CD4-positive, alpha-beta memory T cell (primary cell): ENCODE measurements at regions of chr5 and their contacts with region 1.

Region 1: DNA sequence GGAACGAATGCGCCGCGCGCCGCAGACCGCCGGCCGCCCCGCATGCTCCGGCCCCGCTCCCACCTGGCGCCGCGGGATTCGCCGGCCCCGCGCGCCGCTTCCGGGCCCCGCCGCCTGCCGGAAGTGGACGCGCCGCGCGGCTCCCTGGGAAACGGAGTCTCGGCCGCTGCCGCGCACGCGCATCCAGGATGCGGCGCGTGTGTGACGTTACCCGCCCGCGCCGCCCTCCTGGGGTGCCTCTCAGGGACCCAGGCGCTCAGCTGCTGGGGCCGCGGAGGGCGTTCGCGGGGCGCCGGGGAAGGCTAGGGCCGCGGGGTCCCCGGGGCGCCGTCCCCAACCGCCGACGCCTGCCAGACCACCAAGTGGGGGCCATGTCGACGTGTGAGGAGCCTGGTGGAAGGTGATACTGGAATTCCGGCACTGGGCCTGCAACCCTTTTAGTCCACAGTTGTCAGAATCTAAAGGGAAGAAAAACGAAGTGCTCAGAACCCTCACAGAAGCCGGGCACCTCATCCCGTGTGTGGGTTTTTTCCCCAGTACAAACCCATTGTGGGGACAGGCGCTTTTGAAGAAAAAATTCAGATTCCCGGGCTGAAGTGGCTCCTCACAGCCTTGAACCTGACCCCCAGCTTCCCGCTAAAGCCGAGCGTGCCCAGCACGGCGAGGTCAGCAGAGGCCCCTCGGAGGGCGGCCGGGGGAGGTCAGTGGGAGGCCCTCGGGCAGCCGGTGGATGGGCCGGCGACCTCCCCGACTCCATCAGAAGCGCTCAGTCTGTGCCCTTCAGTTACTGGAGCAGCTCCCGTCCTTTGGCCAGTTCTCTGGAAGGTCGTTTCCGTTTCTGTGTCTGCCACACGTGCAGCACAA is at the start of gene CLPTM1L:
- DNase-seq: peak; percentile 83 to 91 (median 90)
- H3K4me3 ChIP-seq: peak within 1 kb of the TSS; percentile 86 to 96
- H3K4me3 Mint-ChIP-seq: peak within 1 kb of the TSS; percentile 88 to 95 (median 92)
- H3K27ac ChIP-seq: peak within 1 kb of the TSS; percentile 75
- H3K27ac Mint-ChIP-seq: peak within 1 kb of the TSS; percentile 82 to 98 (median 88)
- H3K4me1 ChIP-seq: peaks cover 25% of the 10 kb centered on the region
- H3K4me1 Mint-ChIP-seq: peaks cover 18 to 48% (median 35%) of the 10 kb centered on the region in 4 donors
- H3K27me3 ChIP-seq: no peaks in the 10 kb centered on the region
- H3K27me3 Mint-ChIP-seq: no peaks in the 10 kb centered on the region
- total RNA-seq, gene CLPTM1L: 86.0 to 87.4 TPM

Region 2: GRCh38 chr5:1167728-1168709 is 177.2 kb before region 1 on chr5:
- CTCF ChIA-PET with region 1: interaction called, 4 read pairs
- POLR2A ChIA-PET with region 1: no interaction called
- intact Hi-C with region 1: loop called (anchors 1 kb)
- DNase-seq: peak; percentile 65 to 73 (median 71)
- H3K4me3 ChIP-seq: no peak overlapping the region
- H3K4me3 Mint-ChIP-seq: peak overlapping the region; percentile 43 to 86 (median 79)
- H3K27ac ChIP-seq: no peak overlapping the region
- H3K27ac Mint-ChIP-seq: peak overlapping the region in 1 of 7 donors; percentile 8
- H3K4me1 ChIP-seq: peaks cover 10% of the 10 kb centered on the region
- H3K4me1 Mint-ChIP-seq: peaks cover 5 to 18% (median 9%) of the 10 kb centered on the region in 4 donors
- H3K27me3 ChIP-seq: no peaks in the 10 kb centered on the region
- H3K27me3 Mint-ChIP-seq: peaks cover 7 to 20% of the 10 kb centered on the region in 2 donors

Region 3: GRCh38 chr5:1255081-1255561 is 90.1 kb before region 1 on chr5:
- CTCF ChIA-PET with region 1: interaction called, 8 read pairs
- POLR2A ChIA-PET with region 1: interaction called, 9 read pairs
- intact Hi-C with region 1: loop called (anchors 1 kb)
- DNase-seq: peak; percentile 59 to 66 (median 64)
- H3K4me3 ChIP-seq: peak overlapping the region; percentile 12 to 34
- H3K4me3 Mint-ChIP-seq: peak overlapping the region; percentile 69 to 84 (median 82)
- H3K27ac ChIP-seq: no peak overlapping the region
- H3K27ac Mint-ChIP-seq: peak overlapping the region; percentile 36 to 81 (median 58)
- H3K4me1 ChIP-seq: peaks cover 18% of the 10 kb centered on the region
- H3K4me1 Mint-ChIP-seq: peaks cover 15 to 22% (median 17%) of the 10 kb centered on the region in 4 donors
- H3K27me3 ChIP-seq: no peaks in the 10 kb centered on the region
- H3K27me3 Mint-ChIP-seq: no peaks in the 10 kb centered on the region

Region 4: GRCh38 chr5:1294835-1295649 is 50.2 kb before region 1 on chr5 and contains the start of gene TERT:
- CTCF ChIA-PET with region 1: no interaction called
- POLR2A ChIA-PET with region 1: interaction called, 14 read pairs
- intact Hi-C with region 1: loop called (anchors 1 kb)
- DNase-seq: peak; percentile 58 to 67 (median 62)
- H3K4me3 ChIP-seq: peak within 1 kb of the TSS in 1 of 2 donors; percentile 45
- H3K4me3 Mint-ChIP-seq: peak within 1 kb of the TSS in 5 of 8 donors; percentile 33 to 66 (median 49)
- H3K27ac ChIP-seq: no peak within 1 kb of the TSS
- H3K27ac Mint-ChIP-seq: no peak within 1 kb of the TSS
- H3K4me1 ChIP-seq: peaks cover 11% of the 10 kb centered on the region
- H3K4me1 Mint-ChIP-seq: peaks cover 0 to 6% (median 0%) of the 10 kb centered on the region in 4 donors
- H3K27me3 ChIP-seq: no peaks in the 10 kb centered on the region
- H3K27me3 Mint-ChIP-seq: no peaks in the 10 kb centered on the region
- total RNA-seq, gene TERT: not detected

Region 5: GRCh38 chr5:1315709-1316587 is 29.3 kb before region 1 on chr5:
- CTCF ChIA-PET with region 1: interaction called, 5 read pairs
- POLR2A ChIA-PET with region 1: interaction called, 22 read pairs
- intact Hi-C with region 1: loop called (anchors 1 kb)
- DNase-seq: peak; percentile 76 to 88 (median 78)
- H3K4me3 ChIP-seq: peak overlapping the region; percentile 53 to 62
- H3K4me3 Mint-ChIP-seq: peak overlapping the region; percentile 77 to 92 (median 84)
- H3K27ac ChIP-seq: peak overlapping the region; percentile 53
- H3K27ac Mint-ChIP-seq: peak overlapping the region; percentile 86 to 97 (median 94)
- H3K4me1 ChIP-seq: peaks cover 60% of the 10 kb centered on the region
- H3K4me1 Mint-ChIP-seq: peaks cover 46 to 67% (median 57%) of the 10 kb centered on the region in 4 donors
- H3K27me3 ChIP-seq: no peaks in the 10 kb centered on the region
- H3K27me3 Mint-ChIP-seq: no peaks in the 10 kb centered on the region

Region 6: DNA sequence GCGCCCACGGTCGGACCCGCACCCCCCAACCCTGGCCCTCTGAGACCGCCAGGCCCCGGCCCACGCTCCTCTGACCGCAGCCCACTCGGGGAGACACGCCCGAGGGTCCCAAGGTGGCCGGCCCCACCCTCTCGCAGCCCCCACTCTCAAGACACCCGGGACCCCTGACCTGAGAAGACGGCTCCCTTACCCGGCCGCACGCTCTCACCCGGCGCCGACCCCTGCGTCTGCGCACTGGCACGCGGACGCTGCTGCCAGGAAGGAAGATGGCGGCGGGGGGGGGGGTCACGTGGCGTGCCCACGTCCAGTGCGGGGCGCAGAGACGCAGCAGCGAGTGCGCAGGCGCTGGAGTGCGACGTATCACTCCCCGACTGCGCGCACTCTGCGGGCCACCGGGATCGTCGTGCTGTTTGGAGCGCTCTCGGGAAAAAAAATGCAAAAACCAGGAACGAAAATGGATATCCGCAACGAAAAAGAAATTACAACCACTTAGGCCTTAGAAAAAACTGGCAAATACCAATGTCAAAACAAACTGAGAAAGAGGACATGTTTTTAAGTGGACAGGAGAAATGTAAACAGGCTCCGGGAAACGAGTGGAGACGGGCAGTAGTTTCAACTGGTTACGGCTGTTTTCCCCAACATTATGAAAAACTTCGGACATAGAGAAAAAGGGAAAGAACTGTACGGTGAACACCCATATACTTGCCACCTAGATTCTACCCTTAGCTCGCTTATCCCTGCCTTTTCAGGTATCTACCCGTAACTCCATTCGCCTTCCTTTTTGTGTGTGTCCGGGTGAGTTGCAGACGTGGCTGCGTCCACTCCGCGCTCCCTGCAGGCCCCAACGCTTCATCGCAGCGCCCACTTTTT is 454.6 kb after region 1 on chr5 and contains the start of gene MRPL36:
- CTCF ChIA-PET with region 1: no interaction called
- POLR2A ChIA-PET with region 1: no interaction called
- intact Hi-C with region 1: loop called (anchors 10 kb)
- DNase-seq: peak; percentile 84 to 92 (median 88)
- H3K4me3 ChIP-seq: peak within 1 kb of the TSS; percentile 93 to 97
- H3K4me3 Mint-ChIP-seq: peak within 1 kb of the TSS; percentile 94 to 99 (median 96)
- H3K27ac ChIP-seq: peak within 1 kb of the TSS; percentile 91
- H3K27ac Mint-ChIP-seq: peak within 1 kb of the TSS; percentile 92 to 100 (median 99)
- H3K4me1 ChIP-seq: peaks cover 61% of the 10 kb centered on the region
- H3K4me1 Mint-ChIP-seq: peaks cover 28 to 76% (median 48%) of the 10 kb centered on the region in 4 donors
- H3K27me3 ChIP-seq: no peaks in the 10 kb centered on the region
- H3K27me3 Mint-ChIP-seq: no peaks in the 10 kb centered on the region
- total RNA-seq, gene MRPL36: 30.7 to 34.8 TPM